HEK293 (cell line): ENCODE measurements at regions of chr17 and their contacts with region 1.

Region 1: GRCh38 chr17:30970831-30971567 is at the start of gene RNF135:
- H3K4me3 ChIP-seq: peak within 1 kb of the TSS; percentile 45
- H3K27ac ChIP-seq: peak within 1 kb of the TSS; percentile 99
- H3K4me1 ChIP-seq: peaks cover 9% of the 10 kb centered on the region; the same call in 1 of the 2 replicates
- CTCF ChIP-seq: peak; percentile 51; the same call in 1 of the 2 replicates

Region 2: DNA sequence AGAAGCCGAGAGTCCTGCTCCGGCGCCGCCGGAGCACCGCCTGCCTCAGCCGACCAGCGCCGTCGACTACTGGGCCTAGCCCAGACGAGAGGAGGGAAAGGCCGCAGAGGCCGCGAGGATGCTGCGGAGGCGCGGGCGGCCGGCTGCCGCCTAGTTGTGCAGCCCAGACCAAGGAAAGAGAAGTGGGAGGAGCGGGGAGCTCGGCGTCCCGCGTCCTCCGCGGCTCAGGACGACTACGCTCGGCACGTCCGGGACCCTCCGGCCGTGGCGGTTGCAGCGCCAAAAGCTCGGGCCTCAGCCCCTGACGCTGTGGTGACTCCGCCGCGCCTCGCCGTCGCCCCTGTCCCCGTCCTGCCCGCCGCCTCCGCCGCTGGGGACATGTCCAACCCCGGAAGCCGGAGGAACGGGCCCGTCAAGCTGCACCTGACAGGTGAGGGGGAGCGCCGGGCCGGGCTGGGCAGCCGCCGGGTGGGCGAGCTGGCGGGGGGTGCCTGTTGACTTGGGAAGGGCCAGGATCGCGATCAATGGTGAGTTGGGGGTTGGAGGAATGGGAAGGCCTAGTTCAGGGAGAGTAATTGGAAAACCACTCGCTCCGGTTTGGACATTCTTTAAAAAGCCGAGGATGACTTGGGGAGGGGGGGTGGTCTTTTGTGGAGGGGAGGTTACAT is 37.5 kb after region 1 on chr17:
- CTCF ChIA-PET with region 1: no interaction called
- POLR2A ChIA-PET with region 1: interaction called, 13 read pairs
- H3K4me3 ChIP-seq: peak overlapping the region; percentile 70
- H3K27ac ChIP-seq: peak overlapping the region; percentile 97
- H3K4me1 ChIP-seq: peaks cover 3% of the 10 kb centered on the region; the same call in 1 of the 2 replicates
- CTCF ChIP-seq: peak; percentile 52

Region 3: DNA sequence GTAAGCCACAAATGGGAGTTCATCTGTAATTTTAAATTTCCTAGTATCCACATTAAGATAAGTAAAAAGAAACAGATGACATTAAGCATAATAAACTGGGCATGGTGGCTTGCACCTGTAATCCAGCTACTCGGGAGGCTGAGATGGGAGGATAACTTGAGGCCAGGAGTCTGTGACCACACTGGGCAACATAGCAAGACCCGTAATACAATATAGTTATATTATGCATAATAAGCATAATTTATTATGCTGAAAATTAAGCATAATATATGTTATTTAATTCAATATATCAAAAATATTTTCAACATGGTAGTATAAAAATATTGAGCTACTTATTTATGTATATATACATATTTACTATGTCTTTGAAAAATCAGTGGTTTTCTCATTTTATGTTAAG is 48.0 kb after region 1 on chr17:
- CTCF ChIA-PET with region 1: no interaction called
- POLR2A ChIA-PET with region 1: no interaction called
- H3K4me3 ChIP-seq: no peak overlapping the region
- H3K27ac ChIP-seq: no peak overlapping the region
- H3K4me1 ChIP-seq: no peaks in the 10 kb centered on the region
- CTCF ChIP-seq: no peak